ENCODE measurements at regions of chr19 and their contacts with region 1.

Region 1: DNA sequence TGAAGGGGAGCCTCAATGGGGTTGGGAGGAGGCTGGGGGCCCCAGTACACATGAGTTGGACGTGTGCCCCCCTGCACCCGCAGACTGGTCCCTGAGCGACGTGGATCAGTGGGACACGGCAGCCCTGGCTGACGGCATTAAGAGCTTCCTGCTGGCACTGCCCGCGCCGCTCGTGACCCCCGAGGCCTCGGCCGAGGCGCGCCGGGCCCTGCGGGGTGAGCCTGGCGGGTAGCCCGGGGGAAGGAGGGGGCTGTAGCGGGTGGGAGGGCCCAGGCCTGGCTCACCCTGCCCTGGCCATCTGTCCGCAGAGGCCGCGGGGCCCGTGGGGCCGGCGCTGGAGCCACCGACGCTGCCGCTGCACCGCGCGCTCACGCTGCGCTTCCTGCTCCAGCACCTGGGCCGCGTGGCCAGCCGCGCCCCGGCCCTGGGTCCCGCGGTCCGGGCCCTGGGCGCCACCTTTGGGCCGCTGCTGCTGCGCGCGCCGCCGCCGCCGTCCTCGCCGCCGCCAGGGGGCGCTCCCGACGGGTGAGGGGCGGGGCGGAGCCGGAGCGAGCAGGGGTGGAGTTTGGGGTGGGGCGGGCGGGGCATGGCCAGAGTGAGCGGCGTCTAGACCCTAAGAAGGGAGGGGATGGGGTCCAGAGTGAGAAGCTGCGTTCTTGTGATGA is 8.1 kb downstream of the PIK3R2 start:
- DNase-seq: peak; percentile 69
- H3K4me3 Mint-ChIP-seq: peak overlapping the region; percentile 52
- H3K27ac Mint-ChIP-seq: peak overlapping the region; percentile 25
- H3K4me1 Mint-ChIP-seq: peaks cover 18% of the 10 kb centered on the region
- H3K27me3 Mint-ChIP-seq: no peaks in the 10 kb centered on the region
- CTCF ChIP-seq: peak; percentile 57

Region 2: DNA sequence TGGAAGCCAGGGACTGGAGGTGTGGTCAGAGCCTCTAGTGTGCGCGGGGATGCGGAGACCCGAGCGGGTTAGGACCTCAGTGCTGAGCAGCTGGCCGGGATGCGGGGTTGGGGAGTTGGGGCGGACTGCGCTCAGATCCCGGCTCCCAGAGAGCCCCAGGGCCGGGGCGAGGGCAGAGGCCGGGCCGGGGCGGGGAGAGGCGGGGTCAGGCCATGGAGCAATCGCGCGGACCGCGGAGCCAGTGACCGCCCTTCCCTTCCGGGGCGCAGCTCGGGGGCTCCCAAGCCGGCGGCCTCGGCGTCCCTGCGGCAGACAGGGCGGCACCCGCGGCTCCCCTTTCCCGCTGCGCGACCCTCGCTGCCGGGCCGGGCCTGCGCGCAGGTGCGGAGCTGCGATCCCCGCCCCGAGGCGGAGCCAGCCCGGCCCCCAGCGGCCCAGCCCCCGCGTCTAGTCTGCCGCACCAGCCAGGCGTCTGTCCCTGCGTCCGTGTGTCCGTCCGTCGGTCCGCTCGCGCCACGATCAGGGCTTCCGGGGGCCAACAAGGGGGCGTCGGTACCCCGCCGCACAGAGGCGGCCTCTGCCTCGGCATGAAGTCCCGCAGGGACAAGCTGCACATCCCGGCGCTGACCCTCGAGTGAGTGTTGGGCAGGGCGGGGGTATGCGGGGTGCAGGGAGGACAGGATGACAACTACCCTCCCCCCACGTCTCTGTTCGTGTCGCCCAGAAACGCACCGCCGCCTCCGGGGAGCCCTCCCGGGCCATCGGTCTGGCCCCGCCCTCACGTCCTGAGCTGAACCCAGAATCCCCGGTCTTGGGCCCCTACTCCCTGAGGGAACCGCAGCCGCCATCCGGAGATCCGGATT is 51.1 kb before region 1 on chr19:
- CTCF ChIA-PET with region 1: interaction called, 11 read pairs
- POLR2A ChIA-PET with region 1: interaction called, 8 read pairs
- intact Hi-C with region 1: no loop called
- DNase-seq: peak; percentile 41
- H3K4me3 Mint-ChIP-seq: peak overlapping the region; percentile 68
- H3K27ac Mint-ChIP-seq: no peak overlapping the region
- H3K4me1 Mint-ChIP-seq: peaks cover 15% of the 10 kb centered on the region
- H3K27me3 Mint-ChIP-seq: no peaks in the 10 kb centered on the region
- CTCF ChIP-seq: no peak

Region 3: DNA sequence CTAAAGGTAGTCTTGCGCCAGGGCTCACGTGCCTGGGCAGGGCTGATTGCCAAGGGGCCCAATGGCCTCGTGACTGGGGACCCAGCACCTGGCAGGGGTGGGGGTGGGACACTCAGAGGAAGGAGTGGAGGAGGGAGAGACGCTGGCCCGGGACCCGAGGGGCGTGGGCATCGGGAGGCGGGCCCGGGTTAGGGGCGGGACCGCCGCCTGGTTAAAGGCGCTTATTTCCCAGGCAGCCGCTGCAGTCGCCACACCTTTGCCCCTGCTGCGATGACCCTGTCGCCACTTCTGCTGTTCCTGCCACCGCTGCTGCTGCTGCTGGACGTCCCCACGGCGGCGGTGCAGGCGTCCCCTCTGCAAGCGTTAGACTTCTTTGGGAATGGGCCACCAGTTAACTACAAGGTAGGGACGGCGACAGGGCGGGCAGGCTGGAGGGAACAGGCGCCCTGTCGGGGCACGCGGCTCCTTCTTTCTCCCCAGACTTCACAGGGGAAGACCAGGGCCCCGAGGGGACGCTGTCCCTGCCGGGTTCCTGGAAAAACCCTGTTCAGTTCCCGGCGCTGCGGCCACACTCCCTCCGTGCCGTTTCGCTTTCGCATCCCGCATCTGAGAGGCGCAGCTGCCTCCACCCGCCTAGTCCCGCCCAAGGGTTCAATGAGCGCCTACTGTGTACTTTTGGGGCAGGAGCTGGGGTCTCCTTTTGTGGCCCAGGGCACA is 12.6 kb after region 1 on chr19 and contains the start of gene IFI30:
- CTCF ChIA-PET with region 1: interaction called, 13 read pairs
- POLR2A ChIA-PET with region 1: interaction called, 4 read pairs
- intact Hi-C with region 1: no loop called
- DNase-seq: peak; percentile 72
- H3K4me3 Mint-ChIP-seq: peak within 1 kb of the TSS; percentile 80
- H3K27ac Mint-ChIP-seq: no peak within 1 kb of the TSS
- H3K4me1 Mint-ChIP-seq: peaks cover 5% of the 10 kb centered on the region
- H3K27me3 Mint-ChIP-seq: no peaks in the 10 kb centered on the region
- CTCF ChIP-seq: no peak
- total RNA-seq, gene IFI30: 4.7 and 9.1 TPM in 2 replicates

Region 4: DNA sequence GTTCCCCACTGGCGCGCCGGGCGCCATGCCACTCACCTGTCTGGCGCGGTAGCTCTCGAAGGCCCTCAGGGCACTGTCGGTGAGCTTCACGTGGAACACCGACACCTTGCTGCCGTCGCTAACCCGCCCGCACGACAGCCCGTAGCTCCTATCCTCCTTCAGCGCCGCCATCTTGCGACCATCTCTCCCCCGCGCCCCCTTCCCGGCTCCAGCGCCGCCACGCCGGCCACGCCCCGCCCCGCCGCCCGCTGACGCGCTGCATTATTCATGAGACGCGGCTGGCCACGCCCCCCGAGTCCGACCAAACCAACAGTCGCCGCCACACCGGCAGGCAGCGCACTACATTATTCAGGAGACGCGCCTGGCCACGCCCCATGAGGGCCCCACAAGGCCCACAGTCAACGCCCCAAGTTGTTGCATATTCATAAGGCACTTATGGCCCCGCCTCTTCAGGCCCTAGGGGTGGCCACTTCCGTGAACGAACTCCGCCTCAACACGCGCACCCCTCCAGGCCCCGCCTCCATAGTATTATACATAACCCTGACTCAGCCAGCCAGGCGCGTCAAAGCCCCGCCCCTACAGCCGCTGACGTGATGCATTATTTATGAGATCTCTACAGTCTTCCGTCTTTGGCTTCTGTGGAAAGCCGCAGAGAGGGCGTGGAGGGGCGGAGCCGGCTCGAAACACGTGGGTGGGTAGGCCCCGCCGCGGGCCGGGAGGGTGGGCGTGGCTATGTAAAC is 361.0 kb after region 1 on chr19 and contains the start of gene ELL:
- CTCF ChIA-PET with region 1: no interaction called
- POLR2A ChIA-PET with region 1: no interaction called
- intact Hi-C with region 1: no loop called
- DNase-seq: peak; percentile 100
- H3K4me3 Mint-ChIP-seq: peak within 1 kb of the TSS; percentile 89
- H3K27ac Mint-ChIP-seq: peak within 1 kb of the TSS; percentile 83
- H3K4me1 Mint-ChIP-seq: peaks cover 15% of the 10 kb centered on the region
- H3K27me3 Mint-ChIP-seq: no peaks in the 10 kb centered on the region
- CTCF ChIP-seq: no peak
- total RNA-seq, gene ELL: 20.8 and 22.4 TPM in 2 replicates

Measured in MCF 10A (cell line).